ENCODE measurements at regions of chr15 and their contacts with region 1.

Region 1: DNA sequence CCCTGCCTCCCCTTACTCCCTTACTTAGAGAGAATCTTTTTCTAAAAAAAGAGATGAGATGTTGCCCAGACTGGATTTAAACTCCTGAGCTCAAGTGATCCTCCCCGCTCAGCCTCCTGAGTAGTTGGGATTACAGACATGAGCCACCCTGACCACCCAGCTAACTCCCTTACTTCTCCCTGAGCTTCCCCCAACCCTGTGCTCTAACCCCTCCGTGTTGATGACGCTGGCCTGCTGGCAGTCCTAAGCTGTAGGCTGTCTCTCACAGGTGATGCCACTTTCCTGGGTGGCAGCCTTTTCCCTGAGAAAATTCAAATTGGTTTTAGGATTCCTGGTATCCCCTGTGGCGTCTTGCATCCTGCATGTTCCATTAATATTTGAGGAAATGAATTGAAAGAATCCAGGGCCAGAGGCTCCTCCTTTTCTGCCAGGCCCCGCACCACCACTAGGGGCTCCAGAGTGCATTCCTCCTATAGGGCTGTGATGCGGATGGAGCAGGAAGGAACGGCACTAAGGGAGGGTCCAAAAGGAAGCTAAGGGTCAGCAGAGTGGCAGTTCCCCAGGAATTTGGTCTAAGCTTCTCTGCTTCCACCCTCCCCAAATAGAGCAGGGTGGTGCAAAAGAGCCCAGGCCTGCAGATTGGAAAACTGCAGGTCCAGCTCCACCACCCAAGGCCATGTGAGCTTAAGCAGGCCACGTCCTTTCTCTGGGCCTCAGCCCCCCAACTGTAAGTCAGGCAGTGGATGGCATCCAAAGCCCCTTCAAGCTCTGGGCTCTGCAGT is 101.1 kb downstream of the DAPK2 start:
- DNase-seq: peak; percentile 83
- H3K27ac ChIP-seq: peak overlapping the region; percentile 70
- CTCF ChIP-seq: peak; percentile 98

Region 2: DNA sequence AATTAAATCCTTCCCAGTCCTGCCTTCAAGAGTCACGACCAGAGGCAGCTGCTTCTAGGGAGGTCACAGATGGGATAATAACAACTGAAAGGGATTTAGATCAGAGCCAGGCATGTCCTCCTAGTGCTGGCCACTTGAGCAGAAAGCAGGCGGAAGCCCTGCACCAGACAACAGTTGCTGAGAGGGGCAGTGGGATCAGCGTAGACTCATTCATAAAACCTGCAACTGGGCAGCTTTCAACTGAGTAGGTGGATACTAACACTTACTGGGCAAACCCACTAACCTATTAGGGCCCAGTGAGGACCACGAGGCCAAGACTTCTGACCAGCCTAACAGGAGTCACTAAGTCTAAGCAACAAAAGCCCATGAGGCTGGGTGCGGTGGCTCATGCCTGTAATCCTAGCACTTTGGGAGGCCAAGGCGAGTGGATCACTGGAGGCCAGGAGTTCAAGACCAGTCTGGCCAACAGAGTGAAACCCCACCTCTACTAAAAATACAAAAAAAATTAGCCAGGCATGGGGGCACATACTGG is 34.1 kb after region 1 on chr15:
- CTCF ChIA-PET with region 1: interaction called, 11 read pairs
- POLR2A ChIA-PET with region 1: no interaction called
- DNase-seq: no peak
- H3K27ac ChIP-seq: no peak overlapping the region
- CTCF ChIP-seq: no peak

Region 3: GRCh38 chr15:64010719-64011118 is 65.5 kb after region 1 on chr15:
- CTCF ChIA-PET with region 1: interaction called, 10 read pairs
- POLR2A ChIA-PET with region 1: no interaction called
- DNase-seq: peak; percentile 48
- H3K27ac ChIP-seq: peak overlapping the region; percentile 53
- CTCF ChIP-seq: no peak

Region 4: DNA sequence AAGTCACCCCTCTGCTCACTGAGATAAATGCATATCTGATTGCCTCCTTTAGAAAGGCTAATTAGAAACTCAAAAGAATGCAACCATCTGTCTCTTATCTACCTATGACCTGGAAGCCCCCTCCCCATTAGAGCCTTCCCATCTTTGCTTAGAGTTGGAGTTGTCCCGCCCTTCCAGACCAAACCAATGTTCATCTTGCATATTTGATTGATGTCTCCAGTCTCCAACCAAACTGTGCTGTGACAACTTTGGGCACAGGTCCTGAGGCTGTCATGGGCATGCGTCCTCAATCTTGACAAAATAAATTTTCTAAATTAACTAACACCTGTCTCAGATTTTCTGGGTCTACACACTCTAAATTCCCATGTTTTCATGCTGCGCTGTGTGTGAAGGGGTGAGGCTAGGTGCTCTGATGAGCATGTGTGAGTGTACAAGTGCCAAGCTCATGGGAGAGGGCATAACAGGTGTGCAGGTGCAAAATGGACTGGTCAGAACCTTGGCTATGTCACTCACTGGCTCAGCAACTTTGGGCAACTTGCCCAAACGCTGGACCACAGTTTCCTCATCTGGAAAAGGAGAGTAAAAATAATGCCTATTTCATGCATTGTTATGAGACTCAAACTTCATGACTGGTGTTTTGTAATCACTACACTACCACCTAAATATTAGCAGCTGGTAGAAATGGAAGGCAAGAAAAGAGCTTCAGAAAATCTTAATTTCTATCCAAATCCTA is 93.8 kb after region 1 on chr15:
- CTCF ChIA-PET with region 1: interaction called, 26 read pairs
- POLR2A ChIA-PET with region 1: no interaction called
- DNase-seq: no peak
- H3K27ac ChIP-seq: no peak overlapping the region
- CTCF ChIP-seq: no peak

Region 5: DNA sequence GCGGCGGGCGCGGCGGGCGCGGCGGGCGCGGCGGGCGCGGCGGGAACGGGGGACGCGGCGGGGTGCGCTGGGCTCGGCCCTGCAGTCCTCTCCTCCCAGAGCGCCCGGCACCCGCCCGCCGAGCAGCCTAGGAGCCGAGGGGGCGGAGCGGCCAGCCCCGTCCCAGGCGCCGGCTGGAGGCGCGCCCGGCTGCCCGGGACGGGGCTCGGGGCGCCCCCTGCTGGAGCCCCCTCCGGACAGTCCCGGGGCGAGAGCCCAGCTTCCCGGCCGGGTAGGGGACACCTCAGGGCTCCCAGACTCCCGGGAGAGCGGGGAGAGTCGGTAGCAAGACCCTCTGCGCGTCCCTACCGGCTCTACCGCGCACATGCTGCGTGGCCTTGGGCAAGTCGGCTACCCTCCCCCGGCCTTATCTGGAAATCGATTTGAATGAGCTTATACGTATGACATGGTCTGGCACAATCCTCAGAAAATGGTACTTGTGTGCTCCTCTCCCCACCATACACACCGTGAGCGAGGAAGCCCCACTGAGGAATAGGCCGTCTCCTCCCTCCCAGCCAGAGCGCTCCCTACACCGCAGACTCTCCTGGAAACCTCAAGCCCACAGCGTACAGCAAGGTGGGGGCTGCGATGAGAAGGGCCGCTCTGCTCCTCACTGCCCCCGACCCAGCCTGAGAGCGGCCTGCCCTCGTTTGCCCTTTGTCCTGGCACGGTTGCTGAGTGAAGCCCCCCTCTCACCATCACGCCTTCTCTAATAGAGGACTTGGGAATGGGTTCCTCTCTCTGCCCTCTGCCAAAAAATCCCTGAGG is 101.4 kb after region 1 on chr15 and contains the start of gene DAPK2:
- CTCF ChIA-PET with region 1: interaction called, 56 read pairs
- POLR2A ChIA-PET with region 1: no interaction called
- DNase-seq: peak; percentile 85
- H3K27ac ChIP-seq: peak within 1 kb of the TSS; percentile 34
- CTCF ChIP-seq: peak; percentile 94

Region 6: GRCh38 chr15:64067564-64068030 is 122.4 kb after region 1 on chr15:
- CTCF ChIA-PET with region 1: interaction called, 16 read pairs
- POLR2A ChIA-PET with region 1: no interaction called
- DNase-seq: peak; percentile 71
- H3K27ac ChIP-seq: no peak overlapping the region
- CTCF ChIP-seq: peak; percentile 92